ENCODE measurements at regions of chr1 and their contacts with region 1.

Region 1: GRCh38 chr1:113783254-113784099 is 24.2 kb upstream of the PHTF1 start:
- DNase-seq: peak; percentile 55
- H3K4me3 Mint-ChIP-seq: peak overlapping the region; percentile 40
- H3K27ac Mint-ChIP-seq: peak overlapping the region; percentile 88
- H3K4me1 Mint-ChIP-seq: peaks cover 39% of the 10 kb centered on the region
- H3K27me3 Mint-ChIP-seq: no peaks in the 10 kb centered on the region

Region 2: DNA sequence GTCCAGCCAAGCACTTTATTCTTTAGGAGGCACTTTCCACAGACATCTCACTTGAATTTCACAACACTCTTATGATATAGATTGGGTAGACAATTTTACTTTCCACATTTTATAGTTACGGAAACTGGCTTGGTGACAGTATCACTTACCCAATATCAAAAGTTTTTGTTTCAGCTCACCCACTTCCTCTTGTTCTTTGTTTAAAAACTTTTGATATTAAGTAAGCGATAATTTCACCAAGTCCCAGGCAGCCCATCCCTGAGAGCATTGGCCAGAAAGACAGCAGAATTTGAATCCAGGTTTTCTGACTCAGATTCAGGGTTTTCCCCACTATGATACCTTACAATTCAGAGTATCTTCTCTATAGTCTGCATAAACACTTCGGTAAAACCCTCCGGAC is 650.4 kb before region 1 on chr1:
- CTCF ChIA-PET with region 1: no interaction called
- POLR2A ChIA-PET with region 1: no interaction called
- intact Hi-C with region 1: loop called (anchors 10 kb)
- DNase-seq: peak; percentile 63
- H3K4me3 Mint-ChIP-seq: no peak overlapping the region
- H3K27ac Mint-ChIP-seq: peak overlapping the region; percentile 18
- H3K4me1 Mint-ChIP-seq: peaks cover 43% of the 10 kb centered on the region
- H3K27me3 Mint-ChIP-seq: no peaks in the 10 kb centered on the region

Region 3: DNA sequence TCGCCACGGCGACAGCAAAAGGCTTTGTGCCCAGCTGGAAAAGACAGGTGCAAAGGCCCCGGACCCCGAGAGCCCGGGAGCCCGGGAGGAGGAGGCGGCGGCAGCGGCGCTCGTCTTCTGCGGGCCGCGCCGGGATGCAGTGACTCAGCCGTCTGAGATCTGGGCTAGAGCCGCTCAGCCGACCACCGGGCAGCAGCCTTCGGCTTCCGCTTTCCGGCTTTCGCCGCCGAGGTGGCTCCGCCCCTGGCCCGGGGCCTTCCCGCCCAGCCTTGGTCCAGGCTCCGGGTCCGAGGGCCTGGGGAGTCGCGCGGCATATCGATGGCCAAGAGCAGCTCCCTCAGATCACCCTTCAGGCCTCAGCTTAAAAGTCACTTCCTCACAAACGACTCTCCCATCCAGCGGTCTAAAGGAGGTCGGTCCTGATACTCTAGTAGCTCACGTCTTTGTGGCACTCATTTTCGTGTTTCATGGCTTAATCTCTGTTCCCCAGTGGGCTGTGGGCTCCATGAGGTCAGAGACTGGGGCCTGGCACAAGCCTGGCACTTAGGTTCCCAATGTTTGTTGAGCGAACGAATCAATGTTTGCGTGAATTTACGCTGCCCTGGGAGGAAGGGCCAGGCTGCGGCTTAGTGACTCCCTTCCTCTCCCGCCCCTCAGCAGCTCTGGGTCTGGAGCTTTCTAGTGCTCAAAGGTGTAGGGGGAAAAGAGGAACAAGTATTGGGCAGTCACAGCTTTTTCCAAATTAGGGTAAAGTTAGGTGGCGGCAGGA is 24.0 kb before region 1 on chr1 and contains the start of gene PHTF1:
- CTCF ChIA-PET with region 1: interaction called, 3 read pairs
- POLR2A ChIA-PET with region 1: interaction called, 8 read pairs
- intact Hi-C with region 1: loop called (anchors 1 kb)
- DNase-seq: peak; percentile 76
- H3K4me3 Mint-ChIP-seq: peak within 1 kb of the TSS; percentile 87
- H3K27ac Mint-ChIP-seq: peak within 1 kb of the TSS; percentile 99
- H3K4me1 Mint-ChIP-seq: peaks cover 26% of the 10 kb centered on the region
- H3K27me3 Mint-ChIP-seq: no peaks in the 10 kb centered on the region
- total RNA-seq, gene PHTF1: 12.6 to 12.9 TPM

Region 4: DNA sequence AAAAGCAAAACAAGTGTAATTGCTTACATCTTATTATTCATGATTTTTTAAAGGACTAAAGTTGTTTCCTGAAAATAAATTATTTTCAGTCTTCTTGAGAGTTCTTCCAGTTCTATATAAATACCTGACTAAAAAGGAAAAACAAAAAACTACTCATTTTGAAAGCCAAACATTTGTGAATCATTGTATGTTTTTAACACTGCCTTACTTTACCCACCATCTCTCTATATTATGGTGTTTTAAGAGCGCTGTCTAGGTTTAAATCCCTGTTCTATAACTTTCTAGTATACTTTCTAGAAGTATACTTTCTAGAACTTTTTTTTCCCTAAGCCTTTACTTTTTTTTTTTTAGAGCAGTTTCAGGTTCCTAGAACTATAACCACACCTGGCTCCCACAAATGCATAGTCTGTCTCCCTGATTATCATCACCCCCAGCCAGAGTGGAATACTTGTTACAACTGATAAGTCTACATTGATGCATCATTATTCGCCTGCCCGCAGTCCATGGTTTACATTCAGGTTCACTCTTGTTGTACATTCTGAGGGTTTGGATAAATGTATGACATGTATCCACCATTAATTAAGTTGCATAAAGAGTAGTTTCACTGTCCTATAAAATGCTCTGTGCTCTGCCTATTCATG is 19.0 kb after region 1 on chr1:
- CTCF ChIA-PET with region 1: interaction called, 4 read pairs
- POLR2A ChIA-PET with region 1: interaction called, 4 read pairs
- intact Hi-C with region 1: loop called (anchors 1 kb)
- DNase-seq: peak; percentile 31
- H3K4me3 Mint-ChIP-seq: no peak overlapping the region
- H3K27ac Mint-ChIP-seq: peak overlapping the region; percentile 11
- H3K4me1 Mint-ChIP-seq: peaks cover 75% of the 10 kb centered on the region
- H3K27me3 Mint-ChIP-seq: no peaks in the 10 kb centered on the region

Region 5: DNA sequence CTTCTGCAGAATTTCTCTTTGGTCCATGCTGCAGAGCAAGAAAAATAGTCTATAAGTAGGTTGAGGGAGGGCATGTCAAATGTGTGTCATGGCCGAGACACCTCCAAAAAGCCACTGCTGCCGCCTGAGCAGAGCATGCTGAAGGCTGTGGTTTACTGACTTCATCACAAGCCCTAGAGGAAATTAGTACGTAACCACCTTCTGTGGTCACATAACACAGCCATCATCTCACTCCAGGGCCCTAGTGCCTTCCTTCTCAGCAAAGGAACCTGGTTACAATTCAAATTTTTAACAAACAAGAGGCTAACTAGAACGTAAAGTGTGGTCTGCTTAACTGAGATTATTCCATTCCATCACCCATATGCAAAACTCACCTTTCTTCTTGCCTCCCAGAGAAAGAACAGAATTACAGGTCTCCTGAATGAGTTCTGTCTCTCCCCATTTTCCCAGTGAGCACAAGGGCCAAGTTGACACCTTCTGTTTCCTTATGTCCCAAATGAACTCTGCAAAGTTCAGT is 88.2 kb after region 1 on chr1 and contains the start of gene PTPN22:
- CTCF ChIA-PET with region 1: no interaction called
- POLR2A ChIA-PET with region 1: interaction called, 3 read pairs
- intact Hi-C with region 1: loop called (anchors 1 kb)
- DNase-seq: peak; percentile 89
- H3K4me3 Mint-ChIP-seq: peak within 1 kb of the TSS; percentile 80
- H3K27ac Mint-ChIP-seq: peak within 1 kb of the TSS; percentile 97
- H3K4me1 Mint-ChIP-seq: peaks cover 75% of the 10 kb centered on the region
- H3K27me3 Mint-ChIP-seq: no peaks in the 10 kb centered on the region
- total RNA-seq, gene PTPN22: 45.2 to 45.7 TPM